Natural killer cell (primary cell): ENCODE measurements at regions of chr4 and their contacts with region 1.

Region 1: DNA sequence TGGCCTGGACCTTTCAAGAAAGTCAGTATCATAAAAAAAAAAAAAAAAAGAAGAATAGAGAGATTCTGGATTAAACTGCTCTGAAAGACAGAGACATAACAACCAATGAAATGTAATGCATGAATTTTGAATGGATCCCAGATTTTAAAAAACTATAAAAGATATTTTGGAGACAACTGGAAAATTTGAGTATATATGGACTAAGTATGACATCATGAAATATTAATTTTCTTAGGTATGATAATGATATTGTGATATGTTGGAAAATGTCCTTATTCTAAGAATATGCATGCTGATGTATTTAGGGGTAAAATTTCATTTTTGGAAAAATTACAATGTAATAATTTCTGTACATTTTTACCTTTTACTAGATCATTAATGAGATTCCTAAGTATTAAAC is 52.6 kb downstream of the TBC1D19 start:
- DNase-seq: no peak
- ATAC-seq: no peak
- H3K4me3 ChIP-seq: no peak overlapping the region
- H3K4me3 Mint-ChIP-seq: no peak overlapping the region
- H3K27ac ChIP-seq: no peak overlapping the region
- H3K27ac Mint-ChIP-seq: no peak overlapping the region
- H3K4me1 ChIP-seq: no peaks in the 10 kb centered on the region
- H3K4me1 Mint-ChIP-seq: no peaks in the 10 kb centered on the region
- H3K27me3 ChIP-seq: no peaks in the 10 kb centered on the region
- H3K27me3 Mint-ChIP-seq: no peaks in the 10 kb centered on the region
- CTCF ChIP-seq: no peak

Region 2: DNA sequence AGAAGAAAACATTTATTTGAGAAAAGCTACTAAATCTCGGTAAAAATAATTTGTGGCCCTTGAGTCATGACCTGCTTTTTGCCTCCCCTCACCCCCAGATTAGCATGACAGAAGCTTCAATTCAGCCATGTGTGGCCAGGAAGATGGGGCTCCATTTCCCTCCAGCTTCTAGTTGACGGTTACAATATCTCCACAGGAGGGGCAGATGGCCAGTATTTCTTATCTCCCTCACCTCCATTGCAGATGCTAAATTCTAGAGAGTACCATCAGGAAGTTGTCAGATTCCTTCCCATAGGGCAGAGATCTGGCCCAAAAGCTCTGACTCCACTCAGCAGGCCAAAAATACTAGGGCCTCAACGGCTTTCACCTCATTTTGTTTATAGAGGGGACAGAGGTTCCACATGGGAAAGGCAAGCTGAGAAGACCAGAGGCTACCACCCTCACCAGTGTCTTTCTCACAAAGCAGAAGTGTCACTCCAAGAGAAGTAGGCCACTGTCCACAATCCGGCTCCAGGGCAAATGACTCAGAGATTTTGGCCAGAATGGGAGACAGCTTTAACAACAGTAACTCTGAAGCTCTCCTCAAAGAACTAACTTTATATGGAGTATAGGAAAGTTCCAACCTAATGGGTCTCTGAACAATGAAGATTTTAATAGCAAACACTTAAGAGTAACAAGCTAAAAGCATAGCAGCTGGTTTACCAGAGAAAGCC is 55.7 kb after region 1 on chr4:
- intact Hi-C with region 1: loop called (anchors 2 kb)
- DNase-seq: no peak
- ATAC-seq: no peak
- H3K4me3 ChIP-seq: no peak overlapping the region
- H3K4me3 Mint-ChIP-seq: no peak overlapping the region
- H3K27ac ChIP-seq: no peak overlapping the region
- H3K27ac Mint-ChIP-seq: no peak overlapping the region
- H3K4me1 ChIP-seq: no peaks in the 10 kb centered on the region
- H3K4me1 Mint-ChIP-seq: no peaks in the 10 kb centered on the region
- H3K27me3 ChIP-seq: no peaks in the 10 kb centered on the region
- H3K27me3 Mint-ChIP-seq: no peaks in the 10 kb centered on the region
- CTCF ChIP-seq: no peak